ENCODE measurements at regions of chr3 and their contacts with region 1.

Region 1: GRCh38 chr3:32947789-32948238 is 3.6 kb upstream of the CCR4 start:
- DNase-seq: peak; percentile 85
- ATAC-seq: peak; percentile 76

Region 2: GRCh38 chr3:33074217-33075067 is 126.6 kb after region 1 on chr3:
- intact Hi-C with region 1: loop called (anchors 5 kb)
- DNase-seq: no peak
- ATAC-seq: peak; percentile 50

Region 3: DNA sequence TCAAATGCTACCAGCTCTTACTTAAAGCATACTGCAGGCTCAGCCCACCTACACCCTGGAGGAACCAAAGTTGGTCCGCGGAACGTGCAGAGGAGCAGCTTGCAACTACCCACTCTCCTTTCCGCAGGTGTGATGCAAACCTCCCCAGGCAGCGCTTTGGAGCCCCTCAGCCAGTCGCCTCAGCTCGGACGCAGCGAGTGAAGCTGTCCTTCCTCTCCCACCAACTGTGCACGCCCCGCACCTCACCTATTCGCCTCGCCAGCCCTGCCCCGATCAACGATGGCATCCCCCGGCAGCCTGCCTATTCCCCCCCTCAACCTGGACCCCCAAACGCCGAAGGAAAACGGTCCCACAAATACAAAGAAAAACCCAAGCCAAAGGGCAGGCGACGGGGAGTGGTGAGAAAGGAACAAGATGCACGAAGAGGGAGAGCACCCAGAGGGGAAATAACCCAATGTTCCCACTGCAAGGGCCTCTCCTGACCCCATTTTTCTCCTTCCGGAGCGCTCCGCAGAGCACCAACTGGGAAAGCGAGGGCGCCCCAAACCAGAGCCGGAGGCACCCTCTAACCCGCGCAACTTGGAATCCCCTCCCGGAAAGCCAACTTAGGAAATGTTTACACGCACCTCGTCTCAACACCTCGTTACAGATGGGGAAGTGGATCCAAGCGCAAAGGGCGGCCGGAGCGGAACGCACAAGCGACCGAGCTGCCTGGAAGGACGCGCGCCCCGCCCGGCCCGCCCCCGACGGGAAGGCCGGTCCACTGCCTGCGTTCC is 148.5 kb after region 1 on chr3:
- intact Hi-C with region 1: no loop called
- DNase-seq: peak; percentile 88
- ATAC-seq: peak; percentile 59

Region 4: GRCh38 chr3:33271324-33271723 is 323.5 kb after region 1 on chr3:
- intact Hi-C with region 1: no loop called
- DNase-seq: no peak
- ATAC-seq: no peak

Region 5: GRCh38 chr3:33372218-33373081 is 424.6 kb after region 1 on chr3:
- intact Hi-C with region 1: loop called (anchors 5 kb)
- DNase-seq: no peak
- ATAC-seq: peak; percentile 42

Measured in Right ventricle myocardium inferior (tissue), 1 donor.